ENCODE measurements at regions of chr6 and their contacts with region 1.

Region 1: GRCh38 chr6:30730601-30731435 is 10.7 kb downstream of the TUBB start:
- DNase-seq: no peak
- H3K4me3 ChIP-seq: no peak overlapping the region
- H3K27ac ChIP-seq: no peak overlapping the region
- H3K27me3 ChIP-seq: no peaks in the 10 kb centered on the region
- CTCF ChIP-seq: peak; percentile 50; the same call in 1 of the 2 replicates

Region 2: GRCh38 chr6:30646458-30647241 is 84.2 kb before region 1 on chr6 and contains the start of gene C6orf136:
- CTCF ChIA-PET with region 1: no interaction called
- POLR2A ChIA-PET with region 1: interaction called, 11 read pairs
- DNase-seq: peak; percentile 84
- H3K4me3 ChIP-seq: peak within 1 kb of the TSS; percentile 87
- H3K27ac ChIP-seq: peak within 1 kb of the TSS; percentile 68
- H3K27me3 ChIP-seq: no peaks in the 10 kb centered on the region
- CTCF ChIP-seq: no peak
- polyA plus RNA-seq, gene C6orf136: 5.1 and 5.5 TPM in 2 replicates

Region 3: DNA sequence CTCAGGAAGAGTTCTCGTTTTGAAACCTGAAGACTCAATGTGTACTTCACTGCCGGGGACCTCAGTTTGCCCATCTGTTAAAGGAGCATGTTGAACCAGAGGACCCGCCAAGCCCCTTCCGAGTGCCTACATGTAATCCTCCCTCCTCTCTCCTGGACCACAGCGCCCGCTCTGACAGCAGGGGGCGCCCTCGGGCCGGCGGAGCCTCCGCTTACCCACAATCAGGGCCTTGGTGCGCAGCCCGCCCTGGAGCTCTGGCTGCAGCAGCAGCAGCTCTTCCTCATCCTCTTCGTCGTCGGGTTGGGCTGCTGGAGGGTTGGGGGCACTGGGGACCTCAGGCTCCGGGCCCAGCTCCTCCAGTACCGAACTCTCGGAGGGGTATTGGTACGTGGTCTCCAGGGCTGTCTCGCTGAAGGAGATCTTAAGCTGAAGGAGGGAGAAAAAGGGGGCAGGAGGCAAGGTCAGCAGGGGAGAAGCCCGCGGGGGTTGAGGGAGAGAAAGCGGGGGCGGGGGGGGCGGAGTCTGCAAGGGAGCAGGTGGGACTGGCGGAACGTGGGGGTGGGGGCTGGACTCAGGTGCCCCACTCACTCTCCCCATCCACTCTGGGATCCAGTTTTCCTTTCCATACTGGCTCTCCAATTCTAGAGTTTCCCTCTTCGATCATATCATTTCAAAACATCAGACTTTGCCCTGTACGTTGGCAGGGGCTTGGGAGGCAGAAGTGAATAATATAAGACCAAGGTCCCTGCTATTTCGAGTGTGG is 51.7 kb before region 1 on chr6:
- CTCF ChIA-PET with region 1: interaction called, 11 read pairs
- POLR2A ChIA-PET with region 1: interaction called, 7 read pairs
- DNase-seq: no peak
- H3K4me3 ChIP-seq: peak overlapping the region; percentile 45
- H3K27ac ChIP-seq: peak overlapping the region; percentile 39
- H3K27me3 ChIP-seq: no peaks in the 10 kb centered on the region
- CTCF ChIP-seq: peak; percentile 95

Region 4: GRCh38 chr6:30883685-30884520 is 153.1 kb after region 1 on chr6 and contains the start of gene DDR1:
- CTCF ChIA-PET with region 1: interaction called, 4 read pairs
- POLR2A ChIA-PET with region 1: interaction called, 13 read pairs
- DNase-seq: no peak
- H3K4me3 ChIP-seq: peak within 1 kb of the TSS; percentile 83
- H3K27ac ChIP-seq: no peak within 1 kb of the TSS
- H3K27me3 ChIP-seq: no peaks in the 10 kb centered on the region
- CTCF ChIP-seq: no peak
- polyA plus RNA-seq, gene DDR1: 9.9 and 13.3 TPM in 2 replicates